Ascending aorta (tissue), 2 donors: ENCODE measurements at regions of chr6 and their contacts with region 1.

Region 1: GRCh38 chr6:166382933-166383801 is at the start of gene MPC1:
- DNase-seq: peak; percentile 89 to 98
- H3K4me3 ChIP-seq: peak within 1 kb of the TSS; percentile 74 to 94
- H3K27ac ChIP-seq: peak within 1 kb of the TSS; percentile 95
- H3K4me1 ChIP-seq: peaks cover 0 to 18% of the 10 kb centered on the region in 2 donors
- H3K27me3 ChIP-seq: no peaks in the 10 kb centered on the region
- CTCF ChIP-seq: no peak
- total RNA-seq, gene MPC1: 23.8 TPM

Region 2: DNA sequence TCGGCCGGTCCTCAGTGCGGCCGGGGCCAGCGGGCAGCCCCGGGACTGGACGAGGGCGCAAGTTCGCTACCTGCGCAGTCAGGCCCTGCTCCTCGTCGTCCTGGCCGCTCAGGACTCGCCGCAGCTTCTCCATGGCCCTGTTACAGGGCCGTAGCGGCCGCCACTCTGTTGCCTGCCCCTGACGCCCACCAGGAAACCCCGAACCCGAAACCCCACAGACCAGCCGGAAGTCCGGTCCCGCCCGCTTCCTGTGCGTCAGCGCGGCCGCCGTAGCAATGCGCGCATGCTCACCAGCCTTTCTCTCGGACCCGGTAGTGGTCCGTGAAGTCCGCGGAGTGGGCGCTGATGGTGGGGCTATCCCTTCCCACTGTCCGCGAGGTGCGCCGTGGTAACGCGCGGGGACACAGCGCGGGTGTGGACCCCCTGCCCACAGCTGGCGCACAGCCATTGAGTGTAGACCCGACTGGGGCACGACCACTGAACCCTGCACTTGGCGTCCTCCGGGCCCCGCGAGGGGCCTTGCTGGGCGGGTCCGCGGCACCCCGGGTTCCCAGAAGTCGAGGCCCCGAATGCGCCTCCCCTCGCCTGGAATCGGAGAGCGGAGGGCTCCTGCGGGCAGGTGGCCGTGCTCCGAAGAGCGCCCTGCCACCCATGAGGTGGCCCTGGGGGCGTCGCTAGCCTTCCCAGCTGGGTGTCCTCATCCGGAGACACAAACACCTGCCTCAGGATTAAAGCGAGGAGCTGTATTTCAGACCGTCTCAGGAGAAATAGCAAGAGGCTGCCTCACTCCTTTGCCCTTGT is 40.6 kb before region 1 on chr6 and contains the start of gene SFT2D1:
- intact Hi-C with region 1: loop called (anchors 1 kb)
- DNase-seq: peak; percentile 60 to 92
- H3K4me3 ChIP-seq: peak within 1 kb of the TSS; percentile 66 to 85
- H3K27ac ChIP-seq: peak within 1 kb of the TSS; percentile 85 to 94
- H3K4me1 ChIP-seq: peaks cover 12 to 15% of the 10 kb centered on the region in 2 donors
- H3K27me3 ChIP-seq: no peaks in the 10 kb centered on the region
- CTCF ChIP-seq: no peak
- total RNA-seq, gene SFT2D1: 77.7 TPM

Region 3: DNA sequence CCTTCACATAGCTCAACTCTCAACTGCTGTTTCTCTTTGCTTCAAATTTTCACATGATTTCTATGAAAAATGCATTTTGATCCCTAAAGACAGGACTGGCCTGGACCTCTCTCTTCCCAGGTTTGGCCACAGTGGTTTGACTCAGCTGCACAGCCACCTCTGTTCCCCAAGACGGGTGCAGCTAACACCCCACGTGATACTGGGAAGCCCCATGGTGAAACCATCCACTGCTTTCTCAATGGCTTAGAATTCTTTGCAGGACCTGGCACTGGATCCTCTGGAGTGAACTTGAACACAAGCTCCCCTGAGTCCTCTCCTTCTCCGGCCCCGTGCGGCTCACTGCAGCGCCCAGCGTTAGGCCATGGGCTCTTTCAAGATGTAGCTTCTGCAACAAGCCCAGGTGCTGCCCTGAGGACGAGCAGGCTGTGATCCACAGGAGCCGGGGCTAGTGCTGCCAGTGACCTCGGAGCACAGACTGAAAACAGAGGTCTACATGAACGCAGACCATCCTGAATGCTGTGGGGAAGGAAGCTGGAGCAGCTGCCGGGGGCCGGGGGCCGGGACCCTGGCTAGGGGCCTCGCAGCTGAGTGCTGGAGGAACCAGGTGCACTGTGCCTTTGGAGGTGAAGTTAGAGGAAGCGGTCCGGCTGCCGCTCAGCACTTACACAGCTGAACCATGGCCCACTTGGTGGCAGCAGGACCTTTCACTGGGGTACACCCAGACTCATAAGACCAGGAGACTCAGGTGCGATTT is 58.3 kb after region 1 on chr6:
- intact Hi-C with region 1: no loop called
- DNase-seq: no peak
- H3K4me3 ChIP-seq: no peak overlapping the region
- H3K27ac ChIP-seq: no peak overlapping the region
- H3K4me1 ChIP-seq: no peaks in the 10 kb centered on the region
- H3K27me3 ChIP-seq: no peaks in the 10 kb centered on the region
- CTCF ChIP-seq: no peak

Region 4: DNA sequence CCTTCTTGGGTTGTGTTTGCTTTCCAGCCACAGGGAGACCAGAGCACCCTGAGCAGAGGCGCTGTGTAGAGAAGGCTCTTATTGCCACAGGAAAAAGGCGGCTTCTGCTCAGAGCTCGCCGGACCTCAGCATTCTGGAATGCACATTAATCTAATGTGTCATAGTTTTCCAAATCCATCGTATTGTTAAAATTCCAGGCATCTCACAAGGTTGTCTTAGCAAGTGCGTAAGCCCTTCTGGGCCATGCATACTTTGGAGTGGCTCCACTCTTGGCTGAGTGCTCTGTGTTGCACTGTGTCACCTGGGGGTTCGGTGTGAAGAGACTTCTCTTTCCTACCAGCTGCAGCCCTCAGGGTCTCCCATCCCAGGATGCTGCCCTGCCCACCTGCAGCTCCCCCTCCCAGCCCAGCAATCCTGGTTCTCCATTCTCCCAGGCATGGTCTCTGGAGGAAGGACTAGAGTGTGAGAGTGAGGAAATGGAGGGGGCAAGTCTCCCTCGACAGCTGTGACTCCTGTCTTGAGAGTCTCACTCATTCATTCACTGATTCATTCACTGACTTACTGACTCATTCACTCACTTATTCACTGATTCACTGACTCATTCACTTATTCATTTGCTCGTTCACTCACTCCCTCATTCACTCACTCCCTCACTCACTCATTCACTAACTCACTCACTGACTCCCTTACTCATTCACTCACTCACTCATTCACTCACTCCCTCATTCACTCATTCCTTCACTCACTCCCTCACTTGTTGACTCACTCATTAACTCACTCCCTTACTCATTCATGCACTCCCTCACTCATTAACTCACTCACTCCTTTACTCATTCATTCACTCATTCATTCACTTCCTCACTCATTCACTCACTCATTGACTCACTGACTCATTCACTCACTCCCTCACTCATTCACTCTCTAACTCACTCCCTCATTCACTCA is 83.3 kb after region 1 on chr6:
- intact Hi-C with region 1: loop called (anchors 1 kb)
- DNase-seq: peak in 1 of 2 donors; percentile 75
- H3K4me3 ChIP-seq: peak overlapping the region in 1 of 2 donors; percentile 33
- H3K27ac ChIP-seq: peak overlapping the region; percentile 64 to 75
- H3K4me1 ChIP-seq: peaks cover 0 to 16% of the 10 kb centered on the region in 2 donors
- H3K27me3 ChIP-seq: no peaks in the 10 kb centered on the region
- CTCF ChIP-seq: no peak

Region 5: DNA sequence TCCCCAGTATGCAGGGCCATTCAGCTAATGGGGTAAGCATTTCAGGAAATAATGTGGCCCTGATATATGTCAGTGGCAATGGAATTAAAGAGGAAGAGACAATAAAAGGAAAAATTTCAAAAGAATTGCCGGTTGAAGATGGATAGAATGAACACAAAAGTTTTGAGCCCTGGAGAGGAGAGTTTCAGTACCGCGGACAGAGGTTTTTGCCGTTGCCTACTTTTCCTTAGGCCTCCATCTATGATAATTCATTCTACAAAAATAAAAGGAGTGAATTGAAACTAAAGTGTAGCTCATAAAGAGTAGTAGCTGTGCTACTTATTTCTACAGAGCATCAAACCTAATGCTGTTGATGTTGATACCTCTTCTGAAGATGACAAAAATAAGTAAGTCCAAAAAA is 432.5 kb after region 1 on chr6:
- intact Hi-C with region 1: no loop called
- DNase-seq: no peak
- H3K4me3 ChIP-seq: no peak overlapping the region
- H3K27ac ChIP-seq: no peak overlapping the region
- H3K4me1 ChIP-seq: no peaks in the 10 kb centered on the region
- H3K27me3 ChIP-seq: no peaks in the 10 kb centered on the region
- CTCF ChIP-seq: no peak

Region 6: GRCh38 chr6:166956444-166957086 is 573.4 kb after region 1 on chr6 and contains the start of gene RNASET2:
- intact Hi-C with region 1: loop called (anchors 10 kb)
- DNase-seq: peak; percentile 78 to 98
- H3K4me3 ChIP-seq: peak within 1 kb of the TSS; percentile 75 to 88
- H3K27ac ChIP-seq: peak within 1 kb of the TSS; percentile 73 to 86
- H3K4me1 ChIP-seq: peaks cover 0 to 5% of the 10 kb centered on the region in 2 donors
- H3K27me3 ChIP-seq: no peaks in the 10 kb centered on the region
- CTCF ChIP-seq: no peak
- total RNA-seq, gene RNASET2: 51.9 TPM